Endothelial cell of umbilical vein (primary cell): ENCODE measurements at regions of chr10 and their contacts with region 1.

Region 1: DNA sequence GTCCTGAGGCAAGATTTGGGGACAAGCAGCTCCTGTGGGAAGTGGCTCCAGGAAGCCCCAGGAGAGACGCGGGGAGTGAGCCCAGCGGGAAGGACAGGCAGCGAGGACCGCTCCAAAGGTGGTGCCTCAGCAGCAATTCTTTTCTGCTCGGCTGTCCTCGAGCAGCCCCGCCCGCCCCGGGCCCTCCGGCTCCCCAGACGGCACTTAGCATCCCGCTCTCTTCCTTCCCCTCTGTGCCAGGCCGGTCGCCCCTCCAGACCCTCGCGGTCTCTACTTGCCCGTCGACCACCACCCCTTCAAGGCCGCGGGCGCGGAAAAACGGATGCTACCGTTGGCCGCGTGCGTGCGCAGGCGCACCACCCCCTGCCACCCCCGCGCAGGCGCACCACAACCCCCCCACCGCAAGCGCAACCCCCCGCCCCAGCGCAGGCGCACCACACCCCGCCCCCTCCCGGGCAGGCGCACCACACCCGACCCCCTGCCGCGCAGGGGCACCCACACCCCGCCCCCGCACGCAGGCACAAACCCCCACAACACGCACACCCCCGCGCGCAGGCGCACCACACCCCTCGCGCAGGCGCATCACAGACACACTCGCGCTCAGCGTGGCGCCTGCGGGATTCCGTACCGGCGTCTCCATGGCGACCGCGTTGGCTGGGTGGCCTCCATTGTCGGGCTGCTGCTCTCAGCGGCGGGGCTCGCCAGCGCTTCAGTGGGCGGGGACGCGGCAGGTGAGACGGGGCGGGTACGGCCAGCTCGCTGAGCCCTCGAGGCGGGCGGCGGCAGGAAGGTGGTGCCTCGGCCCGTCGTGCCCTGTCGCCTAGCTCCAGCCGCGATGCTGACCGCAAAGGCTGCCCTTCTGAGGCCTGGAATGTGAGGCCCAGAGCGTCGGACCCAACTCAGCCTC is at the start of gene LRRC27:
- DNase-seq: peak; percentile 98
- H3K4me3 ChIP-seq: peak within 1 kb of the TSS; percentile 54 to 73 (median 71)
- H3K27ac ChIP-seq: peak within 1 kb of the TSS; percentile 14
- H3K4me1 ChIP-seq: peaks cover 28% of the 10 kb centered on the region
- H3K27me3 ChIP-seq: no peaks in the 10 kb centered on the region
- CTCF ChIP-seq: no peak
- POLR2A ChIP-seq: peak; percentile 80
- total RNA-seq, gene LRRC27: 7.8 and 13.6 TPM in 2 replicates

Region 2: GRCh38 chr10:131900350-131901146 is 431.2 kb before region 1 on chr10 and contains the start of gene PPP2R2D:
- CTCF ChIA-PET with region 1: no interaction called
- POLR2A ChIA-PET with region 1: no interaction called
- dilution Hi-C with region 1: no loop called
- intact Hi-C with region 1: loop called (anchors 1 kb)
- DNase-seq: peak; percentile 90
- H3K4me3 ChIP-seq: peak within 1 kb of the TSS; percentile 87 to 95 (median 93)
- H3K27ac ChIP-seq: peak within 1 kb of the TSS; percentile 72
- H3K4me1 ChIP-seq: peaks cover 23% of the 10 kb centered on the region
- H3K27me3 ChIP-seq: peaks cover 12 to 18% of the 10 kb centered on the region in 2 experiments
- CTCF ChIP-seq: no peak
- POLR2A ChIP-seq: peak; percentile 45
- total RNA-seq, gene PPP2R2D: 33.9 and 36.3 TPM in 2 replicates

Region 3: GRCh38 chr10:132307823-132308587 is 23.8 kb before region 1 on chr10 and contains the start of gene STK32C:
- CTCF ChIA-PET with region 1: no interaction called
- POLR2A ChIA-PET with region 1: interaction called, 4 read pairs
- dilution Hi-C with region 1: no loop called
- intact Hi-C with region 1: loop called (anchors 1 kb)
- DNase-seq: peak; percentile 72
- H3K4me3 ChIP-seq: peak within 1 kb of the TSS; percentile 29 to 56 (median 49)
- H3K27ac ChIP-seq: no peak within 1 kb of the TSS
- H3K4me1 ChIP-seq: no peaks in the 10 kb centered on the region
- H3K27me3 ChIP-seq: peaks cover 4 to 11% of the 10 kb centered on the region in 2 experiments
- CTCF ChIP-seq: no peak
- POLR2A ChIP-seq: no peak
- total RNA-seq, gene STK32C: 9.5 and 14.1 TPM in 2 replicates

Region 4: DNA sequence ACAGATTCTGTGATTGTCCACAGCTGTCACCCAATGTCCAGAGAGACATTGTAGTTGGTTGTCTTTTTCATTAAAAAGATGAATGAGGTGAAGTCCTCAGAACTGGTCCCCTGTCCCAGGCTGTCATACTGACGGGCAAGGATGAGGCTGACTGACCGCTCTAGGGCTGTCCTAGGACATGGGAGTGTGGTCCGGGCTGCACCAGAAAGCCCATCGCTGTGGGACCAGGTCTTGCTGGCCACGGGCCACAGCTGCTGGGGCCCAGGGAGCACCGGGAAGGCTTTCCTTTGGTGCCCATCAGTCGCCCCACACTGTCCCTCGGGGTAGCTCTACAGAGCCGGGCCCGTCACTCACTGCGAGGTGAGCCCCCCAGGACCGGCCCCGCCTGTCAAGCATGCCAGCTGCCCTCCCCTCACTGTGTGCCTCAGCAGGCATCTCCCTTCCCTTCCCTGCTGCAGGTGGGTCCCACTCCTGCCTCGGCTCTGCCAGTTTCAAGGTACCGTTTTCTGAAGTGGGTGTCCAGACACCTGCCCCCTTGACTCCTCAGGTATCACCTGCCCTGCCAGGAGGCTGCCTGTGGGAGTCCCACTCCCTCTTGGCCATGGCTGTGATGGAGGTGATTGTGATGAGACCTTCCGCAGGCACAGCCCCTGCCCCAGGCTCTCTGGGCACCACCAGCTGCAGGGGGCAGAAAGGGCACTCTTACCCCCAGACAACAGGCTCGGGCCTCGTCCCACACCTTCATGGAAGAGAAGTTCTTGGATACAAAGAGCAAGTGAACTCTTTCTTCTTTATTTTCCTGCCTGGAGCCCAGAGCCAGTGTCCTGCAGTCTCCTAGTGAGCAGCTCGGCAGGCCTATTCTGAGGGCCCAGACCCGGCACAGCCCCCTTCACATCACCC is 21.9 kb after region 1 on chr10:
- CTCF ChIA-PET with region 1: interaction called, 3 read pairs
- POLR2A ChIA-PET with region 1: no interaction called
- dilution Hi-C with region 1: no loop called
- intact Hi-C with region 1: loop called (anchors 1 kb)
- DNase-seq: no peak
- H3K4me3 ChIP-seq: no peak overlapping the region
- H3K27ac ChIP-seq: no peak overlapping the region
- H3K4me1 ChIP-seq: no peaks in the 10 kb centered on the region
- H3K27me3 ChIP-seq: no peaks in the 10 kb centered on the region
- CTCF ChIP-seq: no peak
- POLR2A ChIP-seq: no peak